ENCODE measurements at regions of chr9 and their contacts with region 1.

Region 1: DNA sequence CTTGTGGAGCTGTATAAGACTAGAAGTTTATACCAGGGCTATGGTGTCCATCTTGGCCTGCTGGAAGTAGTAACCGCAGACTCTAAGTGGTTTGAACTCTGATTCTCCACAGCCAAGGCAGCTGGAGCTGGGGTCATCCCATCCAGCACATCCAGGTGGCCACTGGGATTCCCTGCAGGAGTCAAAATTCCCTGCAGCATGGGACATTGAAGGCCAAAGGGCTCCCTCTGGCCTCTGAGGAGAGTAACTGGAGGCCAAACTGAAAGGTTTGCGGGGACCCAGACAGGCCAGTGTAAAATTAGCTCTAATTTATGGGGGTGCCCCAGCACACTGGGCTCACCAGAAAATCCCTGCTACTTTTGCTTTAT is 12.2 kb upstream of the PRXL2C start:
- DNase-seq: no peak
- H3K27ac ChIP-seq: no peak overlapping the region
- CTCF ChIP-seq: no peak

Region 2: DNA sequence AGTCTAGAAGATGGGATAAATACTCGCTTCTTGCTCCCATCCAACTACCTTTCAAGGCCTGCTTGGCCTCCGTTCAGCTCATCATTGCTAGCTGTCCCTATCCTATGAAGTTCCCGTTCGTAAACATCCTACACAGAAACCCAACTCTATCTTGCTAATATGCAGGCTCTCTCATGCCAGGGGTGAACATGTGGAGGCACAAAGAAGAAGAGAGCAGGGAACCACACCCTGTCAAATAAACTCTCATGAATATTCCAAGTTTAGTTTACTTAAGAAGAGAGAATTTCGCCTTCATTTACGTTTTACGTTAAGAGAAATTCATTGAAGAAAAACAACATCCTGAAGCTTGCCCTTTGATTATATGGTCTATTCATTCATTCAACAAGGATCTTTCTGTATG is 357.5 kb before region 1 on chr9:
- CTCF ChIA-PET with region 1: no interaction called
- POLR2A ChIA-PET with region 1: no interaction called
- DNase-seq: no peak
- H3K27ac ChIP-seq: no peak overlapping the region
- CTCF ChIP-seq: no peak

Region 3: DNA sequence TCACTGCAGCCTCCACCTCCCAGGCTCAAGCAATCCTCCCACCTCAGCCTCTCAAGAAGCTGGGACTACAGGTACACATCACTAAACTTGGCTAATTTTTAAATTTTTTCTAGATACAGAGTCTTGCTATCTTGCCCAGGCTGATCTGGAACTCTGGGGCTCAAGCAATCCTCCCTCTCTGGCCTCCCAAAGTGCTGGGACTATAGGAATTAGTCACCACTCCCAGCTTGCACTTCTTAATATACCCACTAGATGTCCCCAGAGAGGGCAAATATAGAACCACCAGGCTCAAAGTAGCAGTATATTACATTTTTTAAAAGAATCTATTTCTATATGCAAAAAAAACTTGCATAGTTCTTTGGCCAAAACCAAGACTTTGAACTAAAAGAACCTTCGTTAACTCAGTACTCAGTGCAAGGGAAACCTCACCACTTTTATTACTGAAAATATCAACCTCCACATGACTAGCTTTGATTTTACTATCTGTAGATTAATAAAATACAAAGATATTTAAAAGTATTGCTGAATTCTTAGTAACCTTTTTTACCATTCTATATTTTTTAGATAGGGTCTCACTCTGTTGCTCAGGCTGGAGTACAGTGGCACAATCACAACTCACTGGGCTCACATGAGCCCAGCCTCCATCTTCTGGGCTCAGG is 339.5 kb before region 1 on chr9:
- CTCF ChIA-PET with region 1: interaction called, 11 read pairs
- POLR2A ChIA-PET with region 1: no interaction called
- DNase-seq: peak; percentile 74
- H3K27ac ChIP-seq: no peak overlapping the region
- CTCF ChIP-seq: peak; percentile 99

Region 4: DNA sequence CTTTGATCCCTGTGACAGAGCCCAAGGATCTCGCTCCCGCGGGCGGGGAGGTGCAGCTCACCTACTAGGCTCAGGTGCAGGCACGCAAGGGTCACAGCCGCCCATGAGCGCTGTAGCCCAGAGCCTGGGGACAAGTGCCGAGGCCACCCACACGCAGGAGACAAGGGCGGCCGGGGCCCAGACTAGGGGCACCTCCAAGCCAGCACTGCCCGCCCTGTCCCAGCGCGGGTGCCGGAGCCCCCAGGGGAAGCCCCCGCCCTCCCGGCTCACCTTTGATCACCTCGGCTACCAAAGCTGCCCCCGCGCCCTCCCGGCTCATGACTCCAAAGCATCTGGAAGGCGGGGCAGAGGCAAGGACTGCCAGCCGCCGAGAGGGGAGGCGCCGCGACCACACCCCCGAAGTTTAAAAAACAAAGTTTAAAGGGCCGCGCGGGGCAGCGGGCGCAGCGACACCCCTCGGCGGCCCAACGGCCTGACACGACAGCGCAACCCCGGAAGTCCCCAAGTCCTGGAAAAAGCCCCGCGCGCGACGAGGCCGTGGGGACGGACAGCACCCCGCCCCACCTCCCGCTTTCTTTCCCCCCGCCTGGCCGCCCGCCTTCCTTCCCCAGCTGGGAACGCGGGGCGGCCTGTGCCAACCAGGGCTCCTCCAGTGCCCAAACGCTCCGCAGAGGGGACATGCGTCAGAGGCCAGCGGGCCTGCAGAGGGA is 100.7 kb before region 1 on chr9:
- CTCF ChIA-PET with region 1: interaction called, 10 read pairs
- POLR2A ChIA-PET with region 1: no interaction called
- DNase-seq: peak; percentile 82
- H3K27ac ChIP-seq: peak overlapping the region; percentile 53
- CTCF ChIP-seq: peak; percentile 97